ENCODE measurements at regions of chr19 and their contacts with region 1.

Region 1: DNA sequence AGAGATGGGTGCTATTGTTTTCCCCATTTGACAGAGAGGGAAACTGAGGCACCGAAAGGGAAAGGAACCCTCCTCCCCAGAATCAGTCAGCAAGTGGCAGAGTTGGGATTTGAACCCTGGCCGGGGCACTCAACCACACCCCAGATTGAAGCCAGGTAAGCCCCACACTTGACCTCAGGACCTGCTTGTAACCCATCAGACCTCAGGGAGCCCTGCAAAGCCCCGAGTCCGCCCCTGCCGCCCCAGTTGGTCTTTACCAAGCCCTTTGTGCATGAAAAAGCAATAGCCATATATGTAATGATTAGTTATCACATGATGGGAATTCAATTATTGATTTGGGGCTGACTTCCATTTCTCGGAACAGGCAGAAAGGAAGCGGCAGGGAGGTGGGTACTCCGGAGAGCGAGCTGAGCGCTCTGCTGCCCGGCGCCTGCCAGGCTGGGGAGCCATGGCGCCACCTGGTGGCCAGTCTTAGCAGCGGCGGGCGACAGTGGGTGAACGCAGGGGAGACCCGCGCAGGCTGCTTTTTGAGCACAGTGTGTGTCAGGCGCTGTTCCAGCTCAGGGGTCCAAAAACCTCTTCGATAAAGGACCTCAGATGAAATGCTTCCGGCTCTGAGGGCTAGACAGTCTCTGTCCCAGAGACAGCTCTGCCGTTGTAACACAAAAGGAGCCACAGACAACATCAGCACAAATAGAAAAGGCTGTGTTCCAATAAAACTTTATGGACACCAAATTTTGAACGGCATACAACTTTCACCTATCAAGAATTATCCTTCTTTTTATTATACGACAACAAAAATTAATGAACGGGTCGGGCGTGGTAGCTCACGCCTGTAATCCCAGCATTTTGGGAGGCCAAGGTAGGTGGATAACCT is 82.9 kb upstream of the CACNA1A start:
- H3K4me3 ChIP-seq: no peak overlapping the region
- H3K27ac ChIP-seq: no peak overlapping the region
- H3K4me1 ChIP-seq: no peaks in the 10 kb centered on the region
- CTCF ChIP-seq: peak; percentile 89

Region 2: GRCh38 chr19:13277104-13277809 is 311.9 kb before region 1 on chr19:
- CTCF ChIA-PET with region 1: interaction called, 63 read pairs
- POLR2A ChIA-PET with region 1: no interaction called
- H3K4me3 ChIP-seq: no peak overlapping the region
- H3K27ac ChIP-seq: no peak overlapping the region
- H3K4me1 ChIP-seq: no peaks in the 10 kb centered on the region
- CTCF ChIP-seq: peak; percentile 54

Region 3: DNA sequence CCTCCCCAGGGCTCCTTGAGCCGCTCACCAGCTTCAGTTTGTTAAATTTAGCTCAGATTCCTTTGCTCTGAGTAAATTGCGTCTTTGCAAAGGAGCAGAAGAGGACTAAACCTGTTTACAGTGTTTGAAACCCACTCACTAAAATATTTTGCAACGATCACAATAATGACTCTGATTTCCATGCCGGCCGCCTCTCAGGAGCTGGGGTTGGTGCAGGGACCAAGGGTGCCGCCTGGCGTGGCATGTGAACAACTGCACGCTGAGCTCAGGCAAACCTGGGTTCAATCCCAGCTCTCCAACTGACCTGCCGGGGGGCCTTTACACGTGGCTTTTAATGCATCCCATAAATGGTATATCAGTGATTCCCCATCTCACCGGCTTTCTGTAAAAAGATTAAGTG is 14.3 kb before region 1 on chr19:
- CTCF ChIA-PET with region 1: interaction called, 32 read pairs
- POLR2A ChIA-PET with region 1: no interaction called
- H3K4me3 ChIP-seq: no peak overlapping the region
- H3K27ac ChIP-seq: no peak overlapping the region
- H3K4me1 ChIP-seq: no peaks in the 10 kb centered on the region
- CTCF ChIP-seq: peak; percentile 49; the same call in 1 of the 2 replicates

Region 4: GRCh38 chr19:13718733-13719132 is 129.5 kb after region 1 on chr19:
- CTCF ChIA-PET with region 1: interaction called, 14 read pairs
- POLR2A ChIA-PET with region 1: no interaction called
- H3K4me3 ChIP-seq: no peak overlapping the region
- H3K27ac ChIP-seq: no peak overlapping the region
- H3K4me1 ChIP-seq: no peaks in the 10 kb centered on the region
- CTCF ChIP-seq: peak; percentile 73; the same call in 1 of the 2 replicates

Region 5: GRCh38 chr19:14082094-14082960 is 493.1 kb after region 1 on chr19:
- CTCF ChIA-PET with region 1: no interaction called
- POLR2A ChIA-PET with region 1: no interaction called
- H3K4me3 ChIP-seq: peak overlapping the region; percentile 72
- H3K27ac ChIP-seq: no peak overlapping the region
- H3K4me1 ChIP-seq: no peaks in the 10 kb centered on the region; the same call in 1 of the 2 replicates
- CTCF ChIP-seq: no peak